Activated CD4-positive, alpha-beta memory T cell treated with anti-CD3 and anti-CD28 coated beads for 36 hours (primary cell): ENCODE measurements at regions of chr4 and their contacts with region 1.

Region 1: DNA sequence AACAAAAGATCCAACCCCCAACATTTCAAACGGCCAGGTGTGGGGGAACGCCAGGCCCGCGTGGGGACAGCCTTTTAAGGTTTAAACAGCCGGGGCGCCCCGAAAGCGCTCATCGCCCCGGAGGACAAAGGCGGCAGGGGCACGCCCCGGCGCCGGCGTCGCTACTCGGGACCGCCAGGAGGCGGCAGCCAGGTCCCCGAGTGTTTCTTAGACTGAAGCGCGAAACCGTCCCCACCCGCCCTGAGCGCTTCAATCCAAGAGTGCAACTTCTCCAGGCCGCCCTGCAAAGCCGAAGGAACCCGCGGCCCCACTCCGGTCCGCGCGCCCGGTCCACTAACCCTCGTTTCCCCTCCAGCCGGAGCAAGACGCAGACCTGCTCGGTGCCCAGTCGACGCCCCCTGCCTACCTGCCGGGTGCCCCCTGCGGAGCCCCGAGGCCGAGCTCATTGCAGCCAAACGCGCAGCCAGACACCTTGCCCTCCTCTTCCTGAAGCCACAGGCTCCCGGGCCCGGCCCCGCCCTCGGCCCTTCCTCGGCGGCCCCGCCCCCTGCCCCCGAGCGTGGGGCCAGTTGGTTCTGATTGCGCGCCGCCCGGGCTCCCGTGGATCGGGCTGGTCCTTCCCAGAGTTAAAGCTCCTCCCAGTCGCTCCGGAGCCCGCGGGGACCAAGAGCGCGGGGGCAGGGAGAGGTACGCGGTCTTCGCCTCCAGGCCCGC is at the start of gene CASP6:
- DNase-seq: peak; percentile 79
- H3K4me3 Mint-ChIP-seq: peak within 1 kb of the TSS; percentile 90
- H3K27ac Mint-ChIP-seq: peak within 1 kb of the TSS; percentile 82
- H3K4me1 Mint-ChIP-seq: peaks cover 34% of the 10 kb centered on the region
- H3K27me3 Mint-ChIP-seq: no peaks in the 10 kb centered on the region
- total RNA-seq, gene CASP6: 18.4 to 29.9 TPM

Region 2: DNA sequence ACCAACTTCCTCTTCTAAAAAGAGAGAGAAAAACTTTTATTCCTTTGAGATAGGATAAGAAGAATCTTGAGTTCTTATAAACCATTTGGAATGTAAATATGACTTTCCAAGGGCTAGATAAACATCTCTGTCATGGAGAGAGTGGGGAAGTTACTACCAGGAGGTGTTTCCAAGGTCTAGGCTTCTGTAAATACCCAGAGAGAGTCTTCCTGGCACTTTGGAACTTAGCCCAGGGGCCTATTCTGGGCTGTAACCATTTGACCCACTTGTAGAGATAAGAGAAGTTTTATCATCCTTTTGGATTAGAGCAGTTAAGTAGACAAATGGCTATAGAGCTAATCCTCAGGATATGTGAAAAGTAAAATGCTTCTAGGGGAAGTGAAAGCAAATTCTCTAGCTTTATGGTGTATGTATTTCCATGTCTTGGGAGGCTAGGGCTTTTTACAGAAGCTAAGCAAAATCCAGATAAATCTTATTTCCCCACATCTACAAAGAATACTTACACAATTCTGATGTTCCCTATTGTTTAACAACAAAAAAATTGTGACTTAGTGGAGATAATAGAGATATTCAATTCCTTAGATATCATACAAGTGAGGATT is 92.0 kb before region 1 on chr4:
- CTCF ChIA-PET with region 1: no interaction called
- POLR2A ChIA-PET with region 1: no interaction called
- intact Hi-C with region 1: no loop called
- DNase-seq: no peak
- H3K4me3 Mint-ChIP-seq: no peak overlapping the region
- H3K27ac Mint-ChIP-seq: no peak overlapping the region
- H3K4me1 Mint-ChIP-seq: peaks cover 44% of the 10 kb centered on the region
- H3K27me3 Mint-ChIP-seq: no peaks in the 10 kb centered on the region

Region 3: GRCh38 chr4:109729718-109730618 is 26.9 kb after region 1 on chr4 and contains the start of gene PLA2G12A:
- CTCF ChIA-PET with region 1: no interaction called
- POLR2A ChIA-PET with region 1: interaction called, 3 read pairs
- intact Hi-C with region 1: loop called (anchors 1 kb)
- DNase-seq: peak; percentile 79
- H3K4me3 Mint-ChIP-seq: peak within 1 kb of the TSS; percentile 82
- H3K27ac Mint-ChIP-seq: peak within 1 kb of the TSS; percentile 55
- H3K4me1 Mint-ChIP-seq: peaks cover 9% of the 10 kb centered on the region
- H3K27me3 Mint-ChIP-seq: no peaks in the 10 kb centered on the region
- total RNA-seq, gene PLA2G12A: 17.9 to 21.6 TPM

Region 4: DNA sequence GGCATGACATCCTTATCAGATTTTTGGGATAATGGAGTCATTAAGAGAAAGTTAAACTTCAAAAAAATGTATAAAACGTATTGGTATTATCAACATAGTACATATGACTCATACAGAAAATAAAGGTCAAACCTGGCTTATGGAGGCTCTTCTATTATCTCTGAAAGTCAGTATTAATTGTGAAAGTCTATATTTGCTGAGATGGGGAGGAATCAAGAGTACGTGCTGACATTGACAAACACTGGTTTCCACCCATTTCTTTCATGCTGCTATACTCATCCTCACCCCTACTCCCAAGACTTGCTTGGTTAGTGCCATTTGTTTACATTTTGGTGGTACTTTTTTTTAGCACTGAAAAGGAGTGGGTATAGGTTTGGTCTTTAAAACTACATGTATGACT is 57.6 kb after region 1 on chr4:
- CTCF ChIA-PET with region 1: no interaction called
- POLR2A ChIA-PET with region 1: no interaction called
- intact Hi-C with region 1: loop called (anchors 2 kb)
- DNase-seq: no peak
- H3K4me3 Mint-ChIP-seq: no peak overlapping the region
- H3K27ac Mint-ChIP-seq: no peak overlapping the region
- H3K4me1 Mint-ChIP-seq: peaks cover 11% of the 10 kb centered on the region
- H3K27me3 Mint-ChIP-seq: peaks cover 4% of the 10 kb centered on the region

Region 5: DNA sequence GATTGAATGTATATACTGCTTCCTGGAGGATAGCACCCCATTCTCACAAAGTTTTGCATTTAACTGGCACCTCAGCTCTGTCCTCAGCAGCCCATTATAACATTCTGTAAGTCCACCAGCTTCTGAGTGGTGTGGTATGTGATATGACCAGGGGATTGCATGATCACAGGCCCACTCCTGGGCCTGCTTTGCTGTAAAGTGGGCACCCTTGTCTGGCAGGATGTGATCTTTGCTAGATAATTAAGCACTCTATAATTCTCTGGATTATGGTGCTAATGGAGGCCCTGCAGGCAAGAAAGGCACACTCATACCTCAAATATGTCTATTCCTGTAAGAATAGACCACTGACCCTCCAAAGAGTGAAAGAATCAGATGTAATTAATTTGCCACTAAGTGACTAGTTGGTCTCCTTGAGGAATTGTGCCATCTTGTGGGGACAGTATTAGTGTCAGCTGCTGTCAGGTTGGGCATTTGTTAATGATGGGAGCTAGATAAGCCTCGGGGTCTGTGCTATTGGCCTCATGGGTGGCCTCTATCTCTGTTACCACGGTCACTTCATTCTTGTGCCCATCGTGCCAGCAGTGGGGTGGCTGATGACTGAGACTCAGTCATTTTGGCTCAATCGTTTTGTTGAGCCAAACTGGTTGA is 100.9 kb after region 1 on chr4:
- CTCF ChIA-PET with region 1: interaction called, 4 read pairs
- POLR2A ChIA-PET with region 1: no interaction called
- intact Hi-C with region 1: loop called (anchors 5 kb)
- DNase-seq: peak; percentile 16
- H3K4me3 Mint-ChIP-seq: no peak overlapping the region
- H3K27ac Mint-ChIP-seq: no peak overlapping the region
- H3K4me1 Mint-ChIP-seq: no peaks in the 10 kb centered on the region
- H3K27me3 Mint-ChIP-seq: peaks cover 3% of the 10 kb centered on the region